Activated T-helper 1 cell treated with anti-CD3 and anti-CD28 coated beads, Interleukin-12 subunit alpha, Interleukin-12 subunit beta, Interleukin-2, Interleukin-4 antibody, amounts not matched to agents 30 ng/mL and 10 ng/mL and 1 ng/mL, durations not matched to agents 14 hours and 24 hours and 36 hours (primary cell): ENCODE measurements at regions of chr1 and their contacts with region 1.

Region 1: GRCh38 chr1:151459331-151460046 is at the start of gene POGZ:
- DNase-seq: peak; percentile 88
- H3K4me3 Mint-ChIP-seq: peak within 1 kb of the TSS; percentile 90
- H3K27ac Mint-ChIP-seq: peak within 1 kb of the TSS; percentile 97
- H3K4me1 Mint-ChIP-seq: peaks cover 21% of the 10 kb centered on the region
- H3K27me3 Mint-ChIP-seq: peaks cover 13% of the 10 kb centered on the region
- total RNA-seq, gene POGZ: 89.1 and 91.1 TPM in 2 replicates

Region 2: GRCh38 chr1:151254217-151255213 is 205.0 kb before region 1 on chr1 and contains the start of gene PSMD4:
- intact Hi-C with region 1: loop called (anchors 1 kb)
- DNase-seq: peak; percentile 91
- H3K4me3 Mint-ChIP-seq: peak within 1 kb of the TSS; percentile 98
- H3K27ac Mint-ChIP-seq: peak within 1 kb of the TSS; percentile 88
- H3K4me1 Mint-ChIP-seq: peaks cover 17% of the 10 kb centered on the region
- H3K27me3 Mint-ChIP-seq: no peaks in the 10 kb centered on the region
- total RNA-seq, gene PSMD4: 276 and 285 TPM in 2 replicates

Region 3: GRCh38 chr1:151443846-151444782 is 15.4 kb before region 1 on chr1:
- intact Hi-C with region 1: loop called (anchors 1 kb)
- DNase-seq: peak; percentile 50
- H3K4me3 Mint-ChIP-seq: no peak overlapping the region
- H3K27ac Mint-ChIP-seq: no peak overlapping the region
- H3K4me1 Mint-ChIP-seq: peaks cover 36% of the 10 kb centered on the region
- H3K27me3 Mint-ChIP-seq: no peaks in the 10 kb centered on the region

Region 4: DNA sequence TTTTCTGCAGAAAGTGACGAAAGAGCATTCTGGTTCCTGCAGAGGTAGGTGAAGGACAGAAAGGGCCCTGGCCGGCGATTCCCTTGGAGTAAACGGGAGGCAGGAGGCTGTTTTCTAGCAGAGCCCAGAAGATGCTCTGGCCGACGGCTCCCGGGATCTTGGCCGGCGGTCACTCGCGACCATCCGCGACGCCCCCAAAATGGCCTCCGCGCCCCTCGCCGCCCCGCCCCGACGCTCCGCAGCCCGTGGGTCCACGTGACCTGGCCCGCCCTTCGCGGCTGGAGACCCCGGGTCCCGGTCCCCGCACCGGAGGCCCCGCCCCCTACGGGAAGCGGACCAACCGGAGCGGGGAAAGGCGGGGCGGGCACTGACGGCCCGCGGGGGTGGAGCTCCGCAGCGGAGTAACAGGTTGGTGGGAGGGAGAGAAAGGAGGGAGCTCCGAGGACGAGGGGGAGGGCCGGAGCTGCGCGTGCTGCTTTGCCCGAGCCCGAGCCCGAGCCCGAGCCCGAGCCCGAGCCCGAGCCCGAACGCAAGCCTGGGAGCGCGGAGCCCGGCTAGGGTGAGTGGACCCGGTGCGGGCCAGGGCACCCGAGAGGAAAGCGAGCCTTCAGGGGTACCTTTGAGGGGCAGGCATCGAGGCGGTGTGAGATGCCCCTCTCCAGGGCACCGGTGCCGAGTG is 51.6 kb after region 1 on chr1 and contains the start of gene CGN:
- intact Hi-C with region 1: loop called (anchors 1 kb)
- DNase-seq: peak; percentile 85
- H3K4me3 Mint-ChIP-seq: peak within 1 kb of the TSS; percentile 85
- H3K27ac Mint-ChIP-seq: peak within 1 kb of the TSS; percentile 47
- H3K4me1 Mint-ChIP-seq: peaks cover 32% of the 10 kb centered on the region
- H3K27me3 Mint-ChIP-seq: peaks cover 21% of the 10 kb centered on the region
- total RNA-seq, gene CGN: 0.17 and 0.91 TPM in 2 replicates

Region 5: DNA sequence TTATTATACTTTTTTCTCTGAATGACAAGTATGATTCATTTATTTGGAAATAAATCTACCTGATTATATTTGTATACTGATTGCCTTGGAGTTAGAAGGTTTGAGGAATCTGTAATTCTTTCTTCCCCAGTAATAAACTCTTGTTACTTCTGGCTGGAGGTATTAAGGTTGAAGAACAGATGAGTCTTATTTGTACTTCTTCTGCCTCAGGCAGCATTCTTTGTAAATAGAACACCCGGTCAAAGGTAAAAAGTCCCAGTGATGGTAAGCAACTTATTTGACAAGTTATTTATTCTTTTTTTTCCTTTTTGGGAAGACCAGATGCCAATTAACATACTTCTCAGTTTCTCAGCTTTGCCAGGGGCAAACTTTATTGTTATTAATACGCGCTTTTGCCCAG is 165.3 kb after region 1 on chr1:
- intact Hi-C with region 1: no loop called
- DNase-seq: no peak
- H3K4me3 Mint-ChIP-seq: no peak overlapping the region
- H3K27ac Mint-ChIP-seq: no peak overlapping the region
- H3K4me1 Mint-ChIP-seq: peaks cover 8% of the 10 kb centered on the region
- H3K27me3 Mint-ChIP-seq: no peaks in the 10 kb centered on the region

Region 6: GRCh38 chr1:151790071-151790940 is 330.8 kb after region 1 on chr1 and contains the start of gene TDRKH:
- intact Hi-C with region 1: loop called (anchors 1 kb)
- DNase-seq: peak; percentile 98
- H3K4me3 Mint-ChIP-seq: peak within 1 kb of the TSS; percentile 95
- H3K27ac Mint-ChIP-seq: peak within 1 kb of the TSS; percentile 78
- H3K4me1 Mint-ChIP-seq: peaks cover 33% of the 10 kb centered on the region
- H3K27me3 Mint-ChIP-seq: peaks cover 2% of the 10 kb centered on the region
- total RNA-seq, gene TDRKH: 14.6 and 16.4 TPM in 2 replicates

Region 7: DNA sequence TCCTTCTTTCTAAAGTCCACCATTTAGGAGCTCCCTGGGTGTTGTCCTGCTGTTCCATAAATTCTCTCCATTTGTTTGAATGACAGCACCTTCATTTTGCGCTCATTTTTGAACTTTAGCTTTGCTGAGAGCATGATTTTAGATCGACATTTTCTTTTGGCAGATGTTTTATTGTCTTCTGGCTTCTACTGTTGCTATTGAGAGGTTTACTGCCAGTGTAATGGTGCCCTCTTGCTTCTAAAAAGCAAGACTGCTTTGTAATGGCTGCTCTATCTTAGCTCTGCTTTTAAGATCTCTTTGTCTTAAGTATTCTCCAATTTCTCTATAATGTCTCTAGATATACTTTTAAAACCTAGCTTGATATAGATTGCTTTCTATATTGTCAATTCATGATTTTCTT is 422.0 kb after region 1 on chr1:
- intact Hi-C with region 1: no loop called
- DNase-seq: no peak
- H3K4me3 Mint-ChIP-seq: no peak overlapping the region
- H3K27ac Mint-ChIP-seq: no peak overlapping the region
- H3K4me1 Mint-ChIP-seq: no peaks in the 10 kb centered on the region
- H3K27me3 Mint-ChIP-seq: no peaks in the 10 kb centered on the region

Region 8: DNA sequence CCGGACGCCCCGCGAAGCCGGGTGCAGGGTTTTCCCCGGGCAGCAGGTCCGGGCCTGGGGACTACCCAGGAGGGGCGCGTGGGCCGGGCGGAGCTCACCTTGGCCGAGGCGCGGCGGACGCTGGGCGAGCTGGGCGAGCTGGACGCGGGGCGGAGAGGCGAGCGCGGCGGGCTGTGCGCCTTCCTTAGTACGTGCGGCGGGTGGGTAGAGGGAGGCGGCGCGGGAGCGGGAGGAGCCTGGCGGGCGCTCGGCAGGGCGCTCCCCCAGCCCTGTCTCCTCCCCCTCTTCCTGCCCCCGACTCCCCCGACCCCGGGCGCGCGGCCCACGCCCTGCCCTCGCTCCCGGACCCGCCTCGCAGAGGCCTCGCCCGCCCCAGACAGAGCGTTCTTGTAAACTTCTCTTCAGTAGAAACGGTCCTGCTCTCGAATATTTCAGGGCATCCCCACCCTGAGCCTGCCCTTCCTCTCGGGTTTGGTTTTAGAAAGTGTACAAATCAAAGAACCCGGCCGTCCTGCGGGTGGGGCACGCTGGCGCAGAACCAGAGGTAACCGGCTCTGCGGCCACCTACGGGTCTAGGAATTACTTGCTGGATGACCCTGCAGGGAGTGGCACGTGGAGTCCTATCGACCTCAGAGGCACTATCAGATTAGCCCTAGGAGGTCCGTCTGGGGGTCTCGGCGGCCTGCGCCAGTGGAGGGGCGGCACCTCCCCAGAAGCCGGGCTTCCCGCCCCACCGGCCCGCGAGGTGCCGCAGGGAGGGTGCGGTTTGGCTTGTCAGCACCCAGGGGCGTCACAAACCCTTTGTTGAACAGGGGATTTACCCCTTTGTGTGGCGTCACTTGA is 534.4 kb after region 1 on chr1 and contains the start of gene S100A10:
- intact Hi-C with region 1: loop called (anchors 10 kb)
- DNase-seq: peak; percentile 77
- H3K4me3 Mint-ChIP-seq: peak within 1 kb of the TSS; percentile 98
- H3K27ac Mint-ChIP-seq: peak within 1 kb of the TSS; percentile 98
- H3K4me1 Mint-ChIP-seq: peaks cover 49% of the 10 kb centered on the region
- H3K27me3 Mint-ChIP-seq: peaks cover 1% of the 10 kb centered on the region
- total RNA-seq, gene S100A10: 105 and 106 TPM in 2 replicates